Naive thymus-derived CD4-positive, alpha-beta T cell (primary cell): ENCODE measurements at regions of chr12 and their contacts with region 1.

Region 1: DNA sequence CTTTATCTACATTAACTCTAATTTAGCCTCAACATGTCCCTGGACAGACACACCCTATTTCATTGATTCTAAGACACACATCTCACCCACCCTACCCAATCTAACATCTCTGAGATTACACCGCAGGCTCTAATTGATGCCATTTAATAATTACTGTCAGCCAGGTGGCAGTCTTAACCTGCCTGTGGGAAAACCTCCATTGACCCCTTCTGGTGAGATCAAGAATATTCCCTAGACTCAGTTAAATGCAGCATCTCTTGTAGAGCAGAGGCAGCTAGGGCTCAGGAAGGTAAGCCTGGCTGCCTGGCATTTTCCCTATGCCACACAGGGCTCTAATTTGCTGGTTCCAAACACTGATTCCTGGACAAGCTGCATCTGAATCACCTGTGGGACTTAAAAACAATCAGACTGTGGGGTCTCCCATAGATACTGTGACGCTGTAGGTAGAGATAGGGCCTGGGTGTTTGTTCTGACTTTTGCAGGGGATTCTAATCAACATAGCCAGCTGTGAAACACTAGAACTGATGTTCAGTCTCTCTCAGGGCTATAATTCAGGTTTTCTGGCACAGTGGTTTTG is 14.3 kb downstream of the MCRS1 start:
- DNase-seq: peak in 6 of 9 donors; percentile 33 to 61 (median 48)
- ATAC-seq: peak; percentile 68
- H3K4me3 ChIP-seq: no peak overlapping the region
- H3K4me3 Mint-ChIP-seq: no peak overlapping the region
- H3K27ac ChIP-seq: no peak overlapping the region
- H3K27ac Mint-ChIP-seq: peak overlapping the region in 2 of 9 donors; percentile 9 to 24
- H3K4me1 ChIP-seq: peaks cover 0 to 6% of the 10 kb centered on the region in 2 donors
- H3K4me1 Mint-ChIP-seq: peaks cover 5 to 22% (median 8%) of the 10 kb centered on the region in 7 donors
- H3K27me3 ChIP-seq: no peaks in the 10 kb centered on the region
- H3K27me3 Mint-ChIP-seq: peaks cover 0 to 20% (median 0%) of the 10 kb centered on the region in 5 donors

Region 2: GRCh38 chr12:49403971-49404450 is 149.6 kb before region 1 on chr12:
- CTCF ChIA-PET with region 1: no interaction called
- POLR2A ChIA-PET with region 1: no interaction called
- intact Hi-C with region 1: no loop called
- DNase-seq: peak in 3 of 9 donors; percentile 14 to 16 (median 15)
- ATAC-seq: peak; percentile 45
- H3K4me3 ChIP-seq: no peak overlapping the region
- H3K4me3 Mint-ChIP-seq: peak overlapping the region in 1 of 10 donors; percentile 10
- H3K27ac ChIP-seq: no peak overlapping the region
- H3K27ac Mint-ChIP-seq: peak overlapping the region in 2 of 9 donors; percentile 57 to 61
- H3K4me1 ChIP-seq: peaks cover 0 to 4% of the 10 kb centered on the region in 2 donors
- H3K4me1 Mint-ChIP-seq: peaks cover 10 to 21% (median 18%) of the 10 kb centered on the region in 7 donors
- H3K27me3 ChIP-seq: no peaks in the 10 kb centered on the region
- H3K27me3 Mint-ChIP-seq: no peaks in the 10 kb centered on the region

Region 3: GRCh38 chr12:49515266-49515665 is 38.3 kb before region 1 on chr12:
- CTCF ChIA-PET with region 1: interaction called, 7 read pairs
- POLR2A ChIA-PET with region 1: no interaction called
- intact Hi-C with region 1: loop called in 1 of 2 experiments (anchors 1 kb)
- DNase-seq: no peak
- ATAC-seq: no peak
- H3K4me3 ChIP-seq: no peak overlapping the region
- H3K4me3 Mint-ChIP-seq: no peak overlapping the region
- H3K27ac ChIP-seq: no peak overlapping the region
- H3K27ac Mint-ChIP-seq: no peak overlapping the region
- H3K4me1 ChIP-seq: no peaks in the 10 kb centered on the region
- H3K4me1 Mint-ChIP-seq: peaks cover 0 to 6% (median 0%) of the 10 kb centered on the region in 7 donors
- H3K27me3 ChIP-seq: no peaks in the 10 kb centered on the region
- H3K27me3 Mint-ChIP-seq: no peaks in the 10 kb centered on the region

Region 4: DNA sequence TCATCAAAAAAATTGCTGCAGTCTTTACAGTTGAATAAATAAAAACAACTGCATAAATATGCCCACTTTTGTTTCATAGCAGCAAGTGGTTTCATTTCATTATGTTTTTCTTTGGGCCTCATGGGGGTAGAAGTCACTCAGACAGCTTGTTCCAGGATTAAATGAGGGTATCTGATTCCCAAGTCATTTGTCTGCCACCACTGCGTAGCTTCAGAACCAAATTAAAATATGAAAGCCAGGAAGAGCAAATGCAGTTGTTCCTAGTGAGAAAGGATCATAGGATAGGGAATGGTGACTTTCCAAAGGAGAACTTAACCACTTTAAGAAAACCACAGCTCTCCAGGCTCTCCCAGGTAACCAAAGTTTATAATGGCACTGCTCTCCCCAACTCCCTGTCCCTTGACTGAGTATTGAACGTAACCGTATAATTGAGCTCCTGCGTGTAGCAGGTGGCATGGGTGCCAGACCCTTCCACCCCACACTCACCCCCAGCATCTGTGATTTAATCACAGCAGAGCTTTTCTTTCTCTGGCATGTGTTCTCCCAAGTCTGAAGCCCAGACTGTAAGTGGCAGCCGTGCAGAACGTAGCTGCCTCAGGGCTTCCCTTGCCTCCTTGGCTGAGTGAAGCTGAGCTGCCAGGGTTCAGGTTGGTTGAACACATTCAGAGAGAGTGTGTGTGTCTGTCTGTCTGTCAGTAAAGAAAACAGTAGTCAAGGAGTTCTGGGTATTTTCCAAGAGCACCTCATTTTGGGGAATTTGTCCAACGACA is 26.1 kb before region 1 on chr12:
- CTCF ChIA-PET with region 1: no interaction called
- POLR2A ChIA-PET with region 1: no interaction called
- intact Hi-C with region 1: no loop called
- DNase-seq: no peak
- ATAC-seq: no peak
- H3K4me3 ChIP-seq: no peak overlapping the region
- H3K4me3 Mint-ChIP-seq: no peak overlapping the region
- H3K27ac ChIP-seq: no peak overlapping the region
- H3K27ac Mint-ChIP-seq: no peak overlapping the region
- H3K4me1 ChIP-seq: no peaks in the 10 kb centered on the region
- H3K4me1 Mint-ChIP-seq: no peaks in the 10 kb centered on the region
- H3K27me3 ChIP-seq: no peaks in the 10 kb centered on the region
- H3K27me3 Mint-ChIP-seq: no peaks in the 10 kb centered on the region

Region 5: GRCh38 chr12:49567611-49568441 is 14.2 kb after region 1 on chr12 and contains the start of gene MCRS1:
- CTCF ChIA-PET with region 1: interaction called, 6 read pairs
- POLR2A ChIA-PET with region 1: interaction called, 8 read pairs
- intact Hi-C with region 1: loop called (anchors 1 kb)
- DNase-seq: peak; percentile 89 to 94 (median 91)
- ATAC-seq: peak; percentile 92
- H3K4me3 ChIP-seq: peak within 1 kb of the TSS; percentile 81
- H3K4me3 Mint-ChIP-seq: peak within 1 kb of the TSS; percentile 94 to 100 (median 99)
- H3K27ac ChIP-seq: peak within 1 kb of the TSS; percentile 91
- H3K27ac Mint-ChIP-seq: peak within 1 kb of the TSS; percentile 98 to 100 (median 99)
- H3K4me1 ChIP-seq: peaks cover 33 to 42% of the 10 kb centered on the region in 2 donors
- H3K4me1 Mint-ChIP-seq: peaks cover 45 to 76% (median 61%) of the 10 kb centered on the region in 7 donors
- H3K27me3 ChIP-seq: no peaks in the 10 kb centered on the region
- H3K27me3 Mint-ChIP-seq: peaks cover 0 to 3% (median 0%) of the 10 kb centered on the region in 5 donors
- total RNA-seq, gene MCRS1: 70.0 to 85.2 (median 71.4) TPM

Region 6: DNA sequence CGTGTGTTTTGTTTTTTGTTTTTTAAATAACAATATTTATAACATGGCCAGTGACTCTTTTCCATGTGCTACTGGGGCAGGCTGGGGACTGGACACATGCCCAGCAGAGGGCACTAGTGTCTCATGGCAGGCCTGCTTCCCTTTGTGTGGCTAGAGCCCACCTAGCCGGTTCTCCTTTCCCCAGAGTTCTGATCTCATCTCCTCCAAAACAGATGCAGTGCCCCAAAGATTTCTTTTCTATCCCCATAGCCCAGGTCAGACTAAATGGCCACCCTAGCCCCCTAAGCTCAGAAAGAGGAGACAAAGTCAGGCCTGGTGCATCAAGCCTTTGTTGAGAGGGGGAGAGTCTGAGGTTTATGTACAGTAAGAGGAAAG is 91.0 kb after region 1 on chr12:
- CTCF ChIA-PET with region 1: no interaction called
- POLR2A ChIA-PET with region 1: no interaction called
- intact Hi-C with region 1: loop called in 1 of 2 experiments (anchors 5 kb)
- DNase-seq: peak; percentile 71 to 86 (median 81)
- ATAC-seq: peak; percentile 96
- H3K4me3 ChIP-seq: no peak overlapping the region
- H3K4me3 Mint-ChIP-seq: peak overlapping the region in 9 of 10 donors; percentile 3 to 69 (median 41)
- H3K27ac ChIP-seq: peak overlapping the region; percentile 32
- H3K27ac Mint-ChIP-seq: peak overlapping the region; percentile 78 to 96 (median 89)
- H3K4me1 ChIP-seq: peaks cover 7 to 10% of the 10 kb centered on the region in 2 donors
- H3K4me1 Mint-ChIP-seq: peaks cover 25 to 56% (median 37%) of the 10 kb centered on the region in 7 donors
- H3K27me3 ChIP-seq: no peaks in the 10 kb centered on the region
- H3K27me3 Mint-ChIP-seq: no peaks in the 10 kb centered on the region

Region 7: DNA sequence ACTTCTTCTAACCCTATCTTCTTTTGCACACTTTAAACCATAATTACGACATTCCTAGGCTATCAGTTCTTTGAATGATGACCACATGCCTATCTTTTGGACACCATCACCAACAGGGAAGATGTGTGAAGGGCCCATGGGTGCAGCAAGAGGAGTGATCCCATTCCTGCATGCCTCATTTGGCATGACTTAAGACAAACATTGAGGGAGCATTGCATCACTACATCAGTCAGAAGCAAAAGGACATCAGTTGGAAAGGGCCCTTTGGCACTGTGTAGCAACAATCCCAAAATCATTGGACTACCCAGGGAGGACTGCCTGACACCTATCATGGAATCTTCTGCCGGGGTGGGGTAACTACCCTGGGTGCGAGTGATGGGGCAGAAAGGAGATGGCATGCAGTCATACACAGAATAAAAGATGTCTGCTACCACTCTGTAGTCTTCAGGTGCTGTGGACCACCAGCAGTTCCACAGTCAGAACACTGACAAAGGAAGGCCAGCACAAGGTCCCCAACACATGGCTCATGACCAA is 177.0 kb after region 1 on chr12:
- CTCF ChIA-PET with region 1: no interaction called
- POLR2A ChIA-PET with region 1: no interaction called
- intact Hi-C with region 1: no loop called
- DNase-seq: no peak
- ATAC-seq: no peak
- H3K4me3 ChIP-seq: no peak overlapping the region
- H3K4me3 Mint-ChIP-seq: no peak overlapping the region
- H3K27ac ChIP-seq: no peak overlapping the region
- H3K27ac Mint-ChIP-seq: no peak overlapping the region
- H3K4me1 ChIP-seq: no peaks in the 10 kb centered on the region
- H3K4me1 Mint-ChIP-seq: peaks cover 0 to 2% (median 0%) of the 10 kb centered on the region in 7 donors
- H3K27me3 ChIP-seq: no peaks in the 10 kb centered on the region
- H3K27me3 Mint-ChIP-seq: peaks cover 0 to 26% (median 3%) of the 10 kb centered on the region in 5 donors